ENCODE measurements at regions of chr17 and their contacts with region 1.

Region 1: DNA sequence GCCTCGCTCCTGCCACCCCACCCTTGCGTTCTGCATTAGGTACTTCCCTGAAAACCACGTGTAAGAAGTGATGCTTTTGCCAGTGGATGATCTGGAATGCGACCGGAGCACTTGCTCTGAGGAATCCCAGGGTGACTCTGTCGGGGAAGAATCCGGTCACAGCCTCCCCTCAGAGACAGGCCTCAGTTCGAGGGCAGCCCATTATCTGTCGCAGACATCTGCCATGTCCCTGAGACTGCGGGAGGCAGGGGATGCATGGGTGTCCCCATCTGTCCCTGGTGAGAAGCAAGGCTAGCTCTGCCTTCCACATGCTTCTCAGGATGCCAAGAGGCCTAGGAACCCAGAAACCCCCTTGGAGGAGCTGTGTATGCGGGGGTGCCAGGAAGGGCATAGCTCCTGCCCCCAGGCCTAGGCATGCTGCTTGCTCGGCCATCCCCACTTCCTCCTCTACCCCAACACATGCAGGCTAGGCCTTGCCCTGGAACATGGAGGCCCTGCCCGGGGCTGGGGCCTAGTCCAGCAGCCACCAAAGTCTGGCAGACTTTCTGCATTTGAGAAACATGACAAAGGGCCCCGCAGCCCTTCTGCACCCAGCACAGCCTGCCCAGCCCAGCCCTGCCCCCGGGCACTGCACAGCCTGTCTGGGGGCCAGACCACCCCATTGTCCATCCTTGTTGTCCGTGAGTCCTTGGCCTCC is 20.5 kb downstream of the MNT start:
- DNase-seq: no peak
- H3K4me3 Mint-ChIP-seq: no peak overlapping the region
- H3K27ac Mint-ChIP-seq: no peak overlapping the region
- H3K4me1 Mint-ChIP-seq: peaks cover 9% of the 10 kb centered on the region
- H3K27me3 Mint-ChIP-seq: no peaks in the 10 kb centered on the region

Region 2: GRCh38 chr17:2369551-2370210 is 10.7 kb before region 1 on chr17:
- CTCF ChIA-PET with region 1: interaction called, 18 read pairs
- DNase-seq: no peak
- H3K4me3 Mint-ChIP-seq: no peak overlapping the region
- H3K27ac Mint-ChIP-seq: peak overlapping the region; percentile 73
- H3K4me1 Mint-ChIP-seq: no peaks in the 10 kb centered on the region
- H3K27me3 Mint-ChIP-seq: no peaks in the 10 kb centered on the region

Region 3: GRCh38 chr17:2392252-2393173 is 12.1 kb after region 1 on chr17:
- CTCF ChIA-PET with region 1: interaction called, 28 read pairs
- DNase-seq: peak; percentile 97
- H3K4me3 Mint-ChIP-seq: peak overlapping the region; percentile 96
- H3K27ac Mint-ChIP-seq: peak overlapping the region; percentile 99
- H3K4me1 Mint-ChIP-seq: peaks cover 65% of the 10 kb centered on the region
- H3K27me3 Mint-ChIP-seq: no peaks in the 10 kb centered on the region